Activated CD4-positive, alpha-beta T cell treated with anti-CD3 and anti-CD28 coated beads for 36 hours (primary cell): ENCODE measurements at regions of chr12 and their contacts with region 1.

Region 1: GRCh38 chr12:53757095-53757770 is 5.5 kb upstream of the CISTR start:
- DNase-seq: peak; percentile 94
- ATAC-seq: peak; percentile 91
- H3K4me3 Mint-ChIP-seq: peak overlapping the region; percentile 31
- H3K27ac Mint-ChIP-seq: no peak overlapping the region
- H3K4me1 Mint-ChIP-seq: peaks cover 9% of the 10 kb centered on the region
- H3K27me3 Mint-ChIP-seq: peaks cover 36% of the 10 kb centered on the region

Region 2: GRCh38 chr12:53625946-53626701 is 131.1 kb before region 1 on chr12 and contains the start of gene ATF7:
- CTCF ChIA-PET with region 1: no interaction called
- POLR2A ChIA-PET with region 1: no interaction called
- intact Hi-C with region 1: no loop called
- DNase-seq: peak; percentile 99
- ATAC-seq: peak; percentile 96
- H3K4me3 Mint-ChIP-seq: peak within 1 kb of the TSS; percentile 95
- H3K27ac Mint-ChIP-seq: peak within 1 kb of the TSS; percentile 84
- H3K4me1 Mint-ChIP-seq: peaks cover 35% of the 10 kb centered on the region
- H3K27me3 Mint-ChIP-seq: no peaks in the 10 kb centered on the region
- total RNA-seq, gene ATF7: 23.0 to 28.1 TPM

Region 3: GRCh38 chr12:53701518-53702260 is 55.5 kb before region 1 on chr12:
- CTCF ChIA-PET with region 1: interaction called, 12 read pairs
- POLR2A ChIA-PET with region 1: no interaction called
- intact Hi-C with region 1: no loop called
- DNase-seq: peak; percentile 88
- ATAC-seq: peak; percentile 96
- H3K4me3 Mint-ChIP-seq: no peak overlapping the region
- H3K27ac Mint-ChIP-seq: no peak overlapping the region
- H3K4me1 Mint-ChIP-seq: peaks cover 4% of the 10 kb centered on the region
- H3K27me3 Mint-ChIP-seq: peaks cover 60% of the 10 kb centered on the region

Region 4: GRCh38 chr12:53770281-53770680 is 13.0 kb after region 1 on chr12:
- CTCF ChIA-PET with region 1: interaction called, 15 read pairs
- POLR2A ChIA-PET with region 1: no interaction called
- intact Hi-C with region 1: no loop called
- DNase-seq: no peak
- ATAC-seq: no peak
- H3K4me3 Mint-ChIP-seq: no peak overlapping the region
- H3K27ac Mint-ChIP-seq: no peak overlapping the region
- H3K4me1 Mint-ChIP-seq: no peaks in the 10 kb centered on the region
- H3K27me3 Mint-ChIP-seq: peaks cover 35% of the 10 kb centered on the region

Region 5: DNA sequence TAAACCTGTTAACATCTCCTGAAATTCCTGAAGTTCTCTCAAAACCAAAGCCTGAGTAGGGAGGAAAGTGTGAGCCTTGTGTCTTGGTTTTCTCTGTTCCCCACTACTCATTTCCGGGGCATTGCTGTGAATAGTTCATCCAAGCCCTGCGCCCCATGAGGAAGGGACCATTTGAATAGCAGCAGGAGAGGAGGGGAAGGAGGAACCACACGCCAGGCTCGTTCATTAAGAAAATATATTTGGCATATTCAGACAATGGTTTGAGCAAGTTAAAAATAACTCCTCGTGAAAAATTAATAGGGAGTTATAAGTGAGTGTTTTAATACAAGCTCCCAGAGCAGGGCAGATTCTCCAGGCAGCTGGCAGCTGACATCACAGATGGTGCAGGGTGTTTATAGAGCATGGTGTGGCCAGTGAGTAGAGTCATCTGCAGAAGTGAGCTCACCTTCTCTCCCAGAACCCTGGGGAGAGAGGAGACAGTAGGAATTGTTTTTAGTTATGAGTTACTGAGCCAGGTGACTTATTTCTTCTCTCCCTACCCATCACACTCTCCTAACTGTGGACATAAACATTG is 24.1 kb after region 1 on chr12:
- CTCF ChIA-PET with region 1: interaction called, 10 read pairs
- POLR2A ChIA-PET with region 1: no interaction called
- intact Hi-C with region 1: no loop called
- DNase-seq: no peak
- ATAC-seq: no peak
- H3K4me3 Mint-ChIP-seq: no peak overlapping the region
- H3K27ac Mint-ChIP-seq: no peak overlapping the region
- H3K4me1 Mint-ChIP-seq: no peaks in the 10 kb centered on the region
- H3K27me3 Mint-ChIP-seq: peaks cover 37% of the 10 kb centered on the region

Region 6: GRCh38 chr12:53995378-53996239 is 238.4 kb after region 1 on chr12:
- CTCF ChIA-PET with region 1: no interaction called
- POLR2A ChIA-PET with region 1: no interaction called
- intact Hi-C with region 1: no loop called
- DNase-seq: peak; percentile 47
- ATAC-seq: peak; percentile 42
- H3K4me3 Mint-ChIP-seq: peak overlapping the region; percentile 65
- H3K27ac Mint-ChIP-seq: no peak overlapping the region
- H3K4me1 Mint-ChIP-seq: peaks cover 27% of the 10 kb centered on the region
- H3K27me3 Mint-ChIP-seq: peaks cover 83% of the 10 kb centered on the region